ENCODE measurements at regions of chr14 and their contacts with region 1.

Region 1: GRCh38 chr14:54805521-54806322 is 96.9 kb downstream of the GCH1 start:
- DNase-seq: peak; percentile 83
- ATAC-seq: peak; percentile 92
- H3K4me3 Mint-ChIP-seq: no peak overlapping the region
- H3K27ac Mint-ChIP-seq: no peak overlapping the region
- H3K4me1 Mint-ChIP-seq: peaks cover 5% of the 10 kb centered on the region
- H3K27me3 Mint-ChIP-seq: peaks cover 29% of the 10 kb centered on the region

Region 2: DNA sequence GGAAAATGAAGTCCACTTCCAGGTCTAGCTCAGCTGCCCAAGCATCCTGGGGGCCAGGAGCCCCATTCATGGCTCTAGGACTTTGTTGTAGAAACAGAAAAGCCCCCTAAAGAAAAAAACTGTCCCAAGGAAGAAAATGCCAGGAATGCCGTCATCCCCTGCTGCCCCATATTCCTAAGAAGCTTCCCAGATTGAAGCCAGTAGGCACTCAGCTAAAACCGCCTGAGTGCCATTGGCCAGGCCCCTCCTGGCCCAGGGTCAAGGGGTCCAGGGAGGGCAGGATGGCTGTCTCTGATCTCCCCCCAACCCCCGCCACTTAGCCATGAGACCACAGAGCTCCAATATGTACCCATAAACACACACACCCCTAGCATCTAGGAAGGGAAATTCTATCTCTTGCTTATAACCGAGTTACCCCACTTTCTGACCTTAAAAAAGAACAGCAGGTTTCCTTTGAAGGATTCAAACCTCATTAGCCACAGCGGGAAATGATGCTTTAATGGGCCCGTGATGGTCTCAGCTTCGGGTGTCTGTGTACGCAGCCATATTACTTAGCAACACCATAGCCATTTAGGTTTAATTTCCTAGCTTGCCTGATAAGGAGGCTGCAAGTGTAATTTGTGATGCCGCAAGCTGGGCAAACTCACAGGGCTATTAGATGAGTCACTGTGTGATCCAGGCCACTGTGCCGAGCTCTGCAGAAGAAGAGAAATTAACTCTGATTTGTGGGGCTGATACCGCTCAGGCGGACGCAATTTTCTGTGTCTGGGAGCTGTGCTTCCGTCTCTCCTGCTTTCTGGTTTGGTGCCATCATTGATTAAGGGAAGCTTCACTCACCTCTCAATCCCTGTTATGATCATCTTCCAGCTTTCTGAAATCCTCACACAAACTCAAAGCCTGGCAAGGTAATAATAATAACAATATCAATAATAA is 12.7 kb after region 1 on chr14:
- CTCF ChIA-PET with region 1: interaction called, 43 read pairs
- POLR2A ChIA-PET with region 1: interaction called, 3 read pairs
- DNase-seq: no peak
- ATAC-seq: no peak
- H3K4me3 Mint-ChIP-seq: no peak overlapping the region
- H3K27ac Mint-ChIP-seq: no peak overlapping the region
- H3K4me1 Mint-ChIP-seq: no peaks in the 10 kb centered on the region
- H3K27me3 Mint-ChIP-seq: peaks cover 7% of the 10 kb centered on the region

Region 3: DNA sequence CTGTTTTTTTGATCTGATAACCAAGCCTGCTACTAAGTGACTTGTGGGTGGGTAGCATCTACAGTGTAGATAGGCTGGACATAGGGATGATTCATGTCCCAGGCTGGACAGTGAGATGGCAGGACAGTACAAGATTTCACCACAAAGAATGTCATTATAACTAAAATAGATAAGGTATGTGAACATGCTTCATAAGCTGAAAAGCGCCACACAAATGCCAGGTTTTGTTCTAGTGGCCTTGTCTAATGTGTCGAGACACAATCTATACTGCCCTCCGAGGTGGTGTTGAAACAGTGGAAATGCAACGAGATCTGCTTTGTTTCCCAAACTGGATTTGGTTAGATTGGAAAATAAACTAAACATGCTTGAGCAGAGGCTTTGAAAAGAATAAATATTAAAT is 327.7 kb after region 1 on chr14:
- CTCF ChIA-PET with region 1: no interaction called
- POLR2A ChIA-PET with region 1: no interaction called
- DNase-seq: no peak
- ATAC-seq: no peak
- H3K4me3 Mint-ChIP-seq: no peak overlapping the region
- H3K27ac Mint-ChIP-seq: no peak overlapping the region
- H3K4me1 Mint-ChIP-seq: peaks cover 31% of the 10 kb centered on the region
- H3K27me3 Mint-ChIP-seq: peaks cover 2% of the 10 kb centered on the region

Region 4: GRCh38 chr14:55446218-55446654 is 640.5 kb after region 1 on chr14:
- CTCF ChIA-PET with region 1: no interaction called
- POLR2A ChIA-PET with region 1: no interaction called
- DNase-seq: peak; percentile 71
- ATAC-seq: no peak
- H3K4me3 Mint-ChIP-seq: no peak overlapping the region
- H3K27ac Mint-ChIP-seq: no peak overlapping the region
- H3K4me1 Mint-ChIP-seq: no peaks in the 10 kb centered on the region
- H3K27me3 Mint-ChIP-seq: no peaks in the 10 kb centered on the region